HepG2 (cell line): ENCODE measurements at regions of chr13 and their contacts with region 1.

Region 1: GRCh38 chr13:74133657-74134201 is 475 bp downstream of the KLF12 start:
- DNase-seq: peak; percentile 35
- ATAC-seq: peak; percentile 45
- H3K4me3 ChIP-seq: peak overlapping the region; percentile 59 to 72 (median 64)
- H3K27ac ChIP-seq: peak overlapping the region; percentile 33
- H3K4me1 ChIP-seq: peaks cover 52% of the 10 kb centered on the region
- H3K27me3 ChIP-seq: peaks cover 0 to 31% of the 10 kb centered on the region in 2 experiments; a peak in 1 of 5 replicates
- CTCF ChIP-seq: no peak
- EP300 ChIP-seq: no peak
- POLR2A ChIP-seq: no peak
- RAD21 ChIP-seq: no peak

Region 2: GRCh38 chr13:73011751-73012150 is 1122.0 kb before region 1 on chr13:
- CTCF ChIA-PET with region 1: no interaction called
- POLR2A ChIA-PET with region 1: no interaction called
- in situ Hi-C with region 1: no loop called
- intact Hi-C with region 1: no loop called
- DNase-seq: no peak
- ATAC-seq: no peak
- H3K4me3 ChIP-seq: no peak overlapping the region
- H3K27ac ChIP-seq: no peak overlapping the region
- H3K4me1 ChIP-seq: no peaks in the 10 kb centered on the region
- H3K27me3 ChIP-seq: no peaks in the 10 kb centered on the region
- CTCF ChIP-seq: no peak
- EP300 ChIP-seq: no peak
- POLR2A ChIP-seq: no peak
- RAD21 ChIP-seq: no peak

Region 3: DNA sequence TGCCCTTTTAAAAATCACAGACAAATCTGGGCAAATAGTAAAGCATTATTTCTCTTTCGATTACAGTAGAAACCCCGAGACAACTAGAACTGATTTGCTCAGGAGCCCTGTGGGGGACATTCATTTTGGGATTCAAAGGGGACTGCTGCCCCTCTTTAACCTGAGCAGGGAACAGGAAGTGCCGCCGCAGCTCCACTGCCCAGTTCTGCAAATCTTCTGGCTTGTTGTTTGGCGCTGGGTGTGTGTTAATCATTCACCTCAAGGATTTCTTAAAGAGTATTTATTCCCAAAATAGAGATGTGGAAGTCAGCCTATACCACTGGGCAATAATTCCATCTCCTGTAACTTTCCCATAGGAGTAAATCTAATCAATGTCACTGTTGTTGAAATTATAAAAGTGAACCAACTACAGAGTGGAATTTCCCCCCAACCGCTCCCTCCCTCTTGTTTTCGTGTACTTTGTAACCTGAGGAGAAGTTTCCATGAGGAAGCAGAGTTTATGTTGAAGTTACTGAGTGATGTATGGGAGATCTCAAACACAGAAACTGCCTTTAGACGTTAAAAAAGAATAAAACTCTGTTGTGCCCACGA is 515.4 kb before region 1 on chr13:
- CTCF ChIA-PET with region 1: no interaction called
- POLR2A ChIA-PET with region 1: no interaction called
- in situ Hi-C with region 1: no loop called
- intact Hi-C with region 1: no loop called
- DNase-seq: peak; percentile 8
- ATAC-seq: peak; percentile 74
- H3K4me3 ChIP-seq: no peak overlapping the region
- H3K27ac ChIP-seq: no peak overlapping the region
- H3K4me1 ChIP-seq: peaks cover 14% of the 10 kb centered on the region
- H3K27me3 ChIP-seq: no peaks in the 10 kb centered on the region
- CTCF ChIP-seq: no peak
- EP300 ChIP-seq: no peak
- POLR2A ChIP-seq: no peak
- RAD21 ChIP-seq: no peak

Region 4: DNA sequence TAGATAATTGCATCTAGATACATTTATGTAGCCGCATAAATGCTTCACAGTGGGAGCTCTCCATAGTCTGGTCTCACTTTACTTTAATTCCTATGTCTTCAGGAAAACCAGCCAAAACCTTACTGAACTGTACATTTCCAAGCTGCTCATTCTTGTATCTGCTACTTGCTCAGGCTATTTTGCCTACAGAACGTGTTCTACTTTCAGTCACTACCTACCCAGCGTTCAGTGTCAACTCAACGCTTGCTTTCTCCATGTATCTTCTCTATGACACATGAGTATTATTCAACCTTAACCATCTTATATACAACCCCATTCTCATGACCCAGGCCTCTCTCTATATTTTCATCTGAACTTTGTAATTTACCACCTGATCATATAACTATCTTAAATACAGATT is 101.4 kb before region 1 on chr13:
- CTCF ChIA-PET with region 1: no interaction called
- POLR2A ChIA-PET with region 1: no interaction called
- in situ Hi-C with region 1: no loop called
- intact Hi-C with region 1: loop called (anchors 5 kb)
- DNase-seq: no peak
- ATAC-seq: no peak
- H3K4me3 ChIP-seq: no peak overlapping the region
- H3K27ac ChIP-seq: no peak overlapping the region
- H3K4me1 ChIP-seq: no peaks in the 10 kb centered on the region
- H3K27me3 ChIP-seq: no peaks in the 10 kb centered on the region
- CTCF ChIP-seq: no peak
- EP300 ChIP-seq: no peak
- POLR2A ChIP-seq: no peak
- RAD21 ChIP-seq: no peak